ENCODE measurements at regions of chr3 and their contacts with region 1.

Region 1: GRCh38 chr3:138180375-138181029 is 5.8 kb upstream of the DBR1 start:
- DNase-seq: no peak
- H3K4me3 Mint-ChIP-seq: no peak overlapping the region
- H3K27ac Mint-ChIP-seq: no peak overlapping the region
- H3K4me1 Mint-ChIP-seq: peaks cover 2% of the 10 kb centered on the region
- H3K27me3 Mint-ChIP-seq: peaks cover 22% of the 10 kb centered on the region

Region 2: DNA sequence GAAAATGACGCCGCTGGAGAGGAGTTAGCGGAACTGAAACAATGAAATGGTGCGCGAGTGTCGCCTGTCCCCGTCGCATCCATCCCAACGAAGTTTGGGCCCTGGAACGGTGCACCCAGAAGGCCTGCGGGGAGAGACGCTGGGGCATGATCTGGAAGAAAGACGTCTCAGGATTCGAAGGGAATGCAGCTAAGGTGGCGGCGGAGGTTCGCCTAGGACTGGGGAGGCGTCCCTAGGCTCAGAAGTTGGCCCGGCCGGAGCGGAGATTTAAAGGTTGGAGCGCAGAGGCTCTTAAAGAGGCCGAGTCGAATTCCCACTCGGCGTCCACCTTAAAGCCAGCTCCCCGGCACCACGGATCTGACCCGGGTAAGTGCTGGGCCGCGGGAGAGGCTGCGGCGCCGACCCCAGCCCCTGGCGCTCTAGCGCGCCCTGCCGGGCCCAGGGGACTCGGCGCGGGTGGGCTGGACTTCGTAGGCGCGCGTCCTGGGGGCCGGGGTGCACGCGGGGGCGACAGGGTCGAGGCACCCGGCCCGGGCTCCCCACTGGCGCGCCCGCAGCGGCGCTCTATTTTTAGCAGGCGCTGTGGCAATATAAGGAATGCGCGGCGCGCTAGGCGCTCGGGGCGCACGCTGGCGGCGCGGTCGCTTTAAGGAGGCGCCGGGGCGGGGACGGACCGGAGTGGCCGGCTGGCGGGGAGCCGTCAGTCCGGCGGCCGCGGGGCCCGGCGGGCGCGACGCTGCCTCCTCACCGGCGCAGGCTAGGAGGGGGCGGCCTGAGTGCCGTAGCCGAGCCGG is 167.7 kb after region 1 on chr3 and contains the start of gene MRAS:
- intact Hi-C with region 1: loop called (anchors 1 kb)
- DNase-seq: no peak
- H3K4me3 Mint-ChIP-seq: peak within 1 kb of the TSS; percentile 93
- H3K27ac Mint-ChIP-seq: peak within 1 kb of the TSS; percentile 39
- H3K4me1 Mint-ChIP-seq: peaks cover 5% of the 10 kb centered on the region
- H3K27me3 Mint-ChIP-seq: peaks cover 49% of the 10 kb centered on the region
- total RNA-seq, gene MRAS: not detected in 2 replicates

Region 3: GRCh38 chr3:138620431-138620830 is 439.9 kb after region 1 on chr3:
- intact Hi-C with region 1: no loop called
- DNase-seq: no peak
- H3K4me3 Mint-ChIP-seq: no peak overlapping the region
- H3K27ac Mint-ChIP-seq: no peak overlapping the region
- H3K4me1 Mint-ChIP-seq: no peaks in the 10 kb centered on the region
- H3K27me3 Mint-ChIP-seq: peaks cover 17% of the 10 kb centered on the region